ENCODE measurements at regions of chr1 and their contacts with region 1.

Region 1: DNA sequence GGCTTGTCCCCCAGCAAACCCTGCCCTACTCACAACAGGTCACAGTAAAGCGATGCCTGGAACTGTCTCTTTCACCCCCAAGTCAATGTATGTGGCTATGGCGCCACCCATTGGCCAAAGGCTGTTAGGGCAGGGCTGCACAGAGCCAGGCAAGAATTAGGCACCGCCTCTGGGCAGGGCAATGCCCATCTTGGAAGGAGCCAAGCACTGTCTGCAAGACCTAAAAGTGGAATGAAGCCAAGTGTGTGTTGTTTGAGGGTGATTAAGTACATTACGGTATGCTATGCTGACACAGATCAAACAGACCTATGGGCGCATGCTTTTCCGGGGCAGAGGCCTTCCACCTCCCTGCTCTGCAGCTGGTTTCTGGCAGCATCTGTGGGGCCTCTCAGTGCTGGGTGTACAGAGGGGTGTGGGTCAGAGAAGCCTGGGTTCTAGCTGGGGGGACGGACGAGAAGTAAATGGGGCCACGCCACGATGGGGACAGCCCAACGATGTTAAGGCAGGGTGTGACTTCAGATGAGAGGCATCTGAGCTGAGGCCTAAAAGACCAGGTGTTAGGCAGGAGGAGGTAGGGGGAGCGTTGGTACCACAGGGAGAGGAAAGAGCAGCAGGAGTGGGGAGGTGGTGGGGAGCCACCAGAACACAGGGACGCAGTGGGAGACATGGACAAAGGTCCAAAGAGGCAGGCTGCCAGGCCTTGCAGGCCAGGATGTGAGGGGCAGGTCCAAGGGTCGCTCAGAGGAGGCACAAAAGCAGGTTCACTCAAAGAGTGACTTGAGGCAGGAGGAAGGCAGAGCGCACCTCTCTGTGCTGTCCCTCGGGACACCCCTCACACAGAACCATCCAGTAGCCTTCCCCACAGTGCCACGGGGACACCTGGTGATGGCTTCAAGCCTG is 49.8 kb downstream of the ACOT7 start:
- DNase-seq: peak; percentile 94
- H3K4me3 ChIP-seq: no peak overlapping the region
- H3K27ac ChIP-seq: no peak overlapping the region
- H3K4me1 ChIP-seq: peaks cover 33% of the 10 kb centered on the region
- H3K27me3 ChIP-seq: no peaks in the 10 kb centered on the region
- CTCF ChIP-seq: peak; percentile 97 to 100

Region 2: GRCh38 chr1:6275826-6276782 is 67.7 kb before region 1 on chr1:
- CTCF ChIA-PET with region 1: no interaction called
- dilution Hi-C with region 1: no loop called
- in situ Hi-C with region 1: no loop called
- intact Hi-C with region 1: no loop called
- DNase-seq: no peak
- H3K4me3 ChIP-seq: no peak overlapping the region
- H3K27ac ChIP-seq: no peak overlapping the region
- H3K4me1 ChIP-seq: peaks cover 21% of the 10 kb centered on the region
- H3K27me3 ChIP-seq: no peaks in the 10 kb centered on the region
- CTCF ChIP-seq: no peak

Region 3: GRCh38 chr1:6401673-6402072 is 57.9 kb after region 1 on chr1:
- CTCF ChIA-PET with region 1: interaction called, 6 read pairs
- dilution Hi-C with region 1: no loop called
- in situ Hi-C with region 1: no loop called
- intact Hi-C with region 1: loop called (anchors 1 kb)
- DNase-seq: peak; percentile 67
- H3K4me3 ChIP-seq: no peak overlapping the region
- H3K27ac ChIP-seq: no peak overlapping the region
- H3K4me1 ChIP-seq: no peaks in the 10 kb centered on the region
- H3K27me3 ChIP-seq: no peaks in the 10 kb centered on the region
- CTCF ChIP-seq: no peak